ENCODE measurements at regions of chr2 and their contacts with region 1.

Region 1: GRCh38 chr2:226733189-226733858 is 66.3 kb downstream of the IRS1 start:
- DNase-seq: peak in 1 of 2 experiments; percentile 25
- H3K4me3 ChIP-seq: no peak overlapping the region
- H3K4me3 Mint-ChIP-seq: no peak overlapping the region
- H3K27ac Mint-ChIP-seq: no peak overlapping the region
- H3K4me1 ChIP-seq: peaks cover 36% of the 10 kb centered on the region
- H3K4me1 Mint-ChIP-seq: peaks cover 13% of the 10 kb centered on the region
- H3K27me3 ChIP-seq: no peaks in the 10 kb centered on the region
- H3K27me3 Mint-ChIP-seq: no peaks in the 10 kb centered on the region
- CTCF ChIP-seq: no peak

Region 2: GRCh38 chr2:226683196-226683595 is 50.1 kb before region 1 on chr2:
- CTCF ChIA-PET with region 1: no interaction called
- POLR2A ChIA-PET with region 1: no interaction called
- intact Hi-C with region 1: no loop called
- DNase-seq: no peak
- H3K4me3 ChIP-seq: no peak overlapping the region
- H3K4me3 Mint-ChIP-seq: no peak overlapping the region
- H3K27ac Mint-ChIP-seq: no peak overlapping the region
- H3K4me1 ChIP-seq: peaks cover 15% of the 10 kb centered on the region
- H3K4me1 Mint-ChIP-seq: peaks cover 5% of the 10 kb centered on the region
- H3K27me3 ChIP-seq: no peaks in the 10 kb centered on the region
- H3K27me3 Mint-ChIP-seq: no peaks in the 10 kb centered on the region
- CTCF ChIP-seq: no peak

Region 3: DNA sequence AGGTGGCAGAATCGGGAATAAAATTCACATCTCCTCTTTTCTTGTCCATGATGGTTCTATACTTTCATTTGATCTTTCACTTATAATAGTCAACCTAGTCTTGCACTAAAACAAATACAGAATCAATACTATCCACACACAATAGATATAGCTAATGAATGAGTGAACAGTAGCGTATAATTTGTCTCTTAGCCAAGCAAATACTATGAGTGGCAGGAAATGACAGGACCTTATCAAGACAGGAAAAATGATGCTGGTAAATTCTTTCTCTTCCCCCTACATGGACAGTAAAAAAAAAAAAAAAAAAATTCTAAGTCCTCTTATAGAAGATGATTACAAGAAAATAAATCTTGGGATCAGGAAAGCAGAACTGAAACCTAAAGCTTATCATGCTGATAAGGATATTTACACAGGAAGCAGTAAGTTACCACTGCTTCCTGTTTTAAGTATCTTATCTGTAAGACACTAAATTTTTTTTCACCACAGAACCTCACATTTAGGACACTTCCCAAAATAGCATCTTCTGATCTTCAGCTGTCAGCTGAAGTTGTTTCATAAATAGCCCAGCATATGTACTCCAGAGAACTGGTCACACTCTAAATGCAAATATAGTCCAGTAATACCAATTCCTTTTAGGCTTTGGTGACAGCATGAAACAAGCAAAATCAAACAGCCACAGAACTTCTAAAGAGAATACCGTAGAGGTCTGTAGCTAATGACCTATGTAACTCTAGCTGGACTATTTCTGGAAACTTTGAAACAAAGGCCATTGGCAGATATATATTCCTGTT is 39.3 kb after region 1 on chr2:
- CTCF ChIA-PET with region 1: no interaction called
- POLR2A ChIA-PET with region 1: no interaction called
- intact Hi-C with region 1: loop called (anchors 5 kb)
- DNase-seq: no peak
- H3K4me3 ChIP-seq: no peak overlapping the region
- H3K4me3 Mint-ChIP-seq: no peak overlapping the region
- H3K27ac Mint-ChIP-seq: no peak overlapping the region
- H3K4me1 ChIP-seq: peaks cover 36% of the 10 kb centered on the region
- H3K4me1 Mint-ChIP-seq: peaks cover 20% of the 10 kb centered on the region
- H3K27me3 ChIP-seq: no peaks in the 10 kb centered on the region
- H3K27me3 Mint-ChIP-seq: no peaks in the 10 kb centered on the region
- CTCF ChIP-seq: no peak

Measured in Caco-2 (cell line).